ENCODE measurements at regions of chr1 and their contacts with region 1.

Region 1: DNA sequence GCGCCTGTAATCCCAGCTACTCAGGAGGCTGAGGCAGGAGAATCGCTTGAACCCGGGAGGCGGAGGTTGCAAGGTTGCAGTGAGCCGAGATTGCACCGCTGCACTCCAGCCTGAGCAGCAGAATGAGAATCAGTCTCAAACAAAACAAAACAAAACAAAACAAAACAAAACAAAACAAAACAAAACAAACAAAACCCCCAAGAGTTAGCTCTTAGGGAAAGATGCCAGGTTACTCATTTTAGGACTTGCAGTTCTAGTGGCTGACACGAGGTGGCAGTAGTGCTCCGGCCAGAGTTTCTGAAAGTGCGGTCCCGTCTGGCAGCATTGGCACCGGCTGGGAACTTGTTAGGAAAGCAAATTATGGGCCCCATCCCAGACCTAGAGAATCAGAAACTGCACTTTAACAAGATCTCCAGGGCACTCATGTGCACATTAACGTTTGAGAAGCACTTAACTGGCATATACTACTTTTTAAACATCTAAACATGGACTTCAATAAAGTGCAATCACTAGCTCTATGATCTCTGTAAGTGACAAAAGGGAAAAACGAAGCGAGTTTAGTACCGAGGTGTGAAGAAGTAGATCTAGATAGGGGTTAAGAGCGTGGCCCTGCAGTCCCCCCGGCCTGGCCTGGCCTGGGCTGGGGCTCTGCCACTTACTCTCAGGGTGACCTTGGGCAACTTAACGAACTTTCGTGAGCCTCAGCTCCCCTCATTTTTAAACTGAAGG is 41.9 kb upstream of the TNFRSF1B start:
- DNase-seq: peak; percentile 94
- H3K4me3 Mint-ChIP-seq: peak overlapping the region; percentile 38
- H3K27ac Mint-ChIP-seq: peak overlapping the region; percentile 49
- H3K4me1 Mint-ChIP-seq: peaks cover 35% of the 10 kb centered on the region
- H3K27me3 Mint-ChIP-seq: no peaks in the 10 kb centered on the region

Region 2: GRCh38 chr1:12143631-12144155 is 18.8 kb after region 1 on chr1:
- intact Hi-C with region 1: loop called (anchors 2 kb)
- DNase-seq: peak; percentile 79
- H3K4me3 Mint-ChIP-seq: peak overlapping the region; percentile 43
- H3K27ac Mint-ChIP-seq: peak overlapping the region; percentile 85
- H3K4me1 Mint-ChIP-seq: peaks cover 45% of the 10 kb centered on the region
- H3K27me3 Mint-ChIP-seq: no peaks in the 10 kb centered on the region

Region 3: GRCh38 chr1:12161662-12162458 is 37.0 kb after region 1 on chr1:
- intact Hi-C with region 1: loop called (anchors 5 kb)
- DNase-seq: peak; percentile 93
- H3K4me3 Mint-ChIP-seq: peak overlapping the region; percentile 76
- H3K27ac Mint-ChIP-seq: peak overlapping the region; percentile 95
- H3K4me1 Mint-ChIP-seq: peaks cover 77% of the 10 kb centered on the region
- H3K27me3 Mint-ChIP-seq: no peaks in the 10 kb centered on the region

Region 4: GRCh38 chr1:12208764-12209494 is 84.1 kb after region 1 on chr1:
- intact Hi-C with region 1: loop called (anchors 1 kb)
- DNase-seq: peak; percentile 95
- H3K4me3 Mint-ChIP-seq: no peak overlapping the region
- H3K27ac Mint-ChIP-seq: peak overlapping the region; percentile 59
- H3K4me1 Mint-ChIP-seq: peaks cover 38% of the 10 kb centered on the region
- H3K27me3 Mint-ChIP-seq: peaks cover 2% of the 10 kb centered on the region